ENCODE measurements at regions of chr6 and their contacts with region 1.

Region 1: DNA sequence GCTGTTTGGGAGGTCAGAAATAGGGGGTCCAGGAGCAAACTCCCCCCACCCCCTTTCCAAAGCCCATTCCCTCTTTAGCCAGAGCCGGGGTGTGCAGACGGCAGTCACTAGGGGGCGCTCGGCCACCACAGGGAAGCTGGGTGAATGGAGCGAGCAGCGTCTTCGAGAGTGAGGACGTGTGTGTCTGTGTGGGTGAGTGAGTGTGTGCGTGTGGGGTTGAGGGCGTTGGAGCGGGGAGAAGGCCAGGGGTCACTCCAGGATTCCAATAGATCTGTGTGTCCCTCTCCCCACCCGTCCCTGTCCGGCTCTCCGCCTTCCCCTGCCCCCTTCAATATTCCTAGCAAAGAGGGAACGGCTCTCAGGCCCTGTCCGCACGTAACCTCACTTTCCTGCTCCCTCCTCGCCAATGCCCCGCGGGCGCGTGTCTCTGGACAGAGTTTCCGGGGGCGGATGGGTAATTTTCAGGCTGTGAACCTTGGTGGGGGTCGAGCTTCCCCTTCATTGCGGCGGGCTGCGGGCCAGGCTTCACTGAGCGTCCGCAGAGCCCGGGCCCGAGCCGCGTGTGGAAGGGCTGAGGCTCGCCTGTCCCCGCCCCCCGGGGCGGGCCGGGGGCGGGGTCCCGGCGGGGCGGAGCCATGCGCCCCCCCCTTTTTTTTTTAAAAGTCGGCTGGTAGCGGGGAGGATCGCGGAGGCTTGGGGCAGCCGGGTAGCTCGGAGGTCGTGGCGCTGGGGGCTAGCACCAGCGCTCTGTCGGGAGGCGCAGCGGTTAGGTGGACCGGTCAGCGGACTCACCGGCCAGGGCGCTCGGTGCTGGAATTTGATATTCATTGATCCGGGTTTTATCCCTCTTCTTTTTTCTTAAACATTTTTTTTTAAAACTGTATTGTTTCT is at the start of gene VEGFA:
- DNase-seq: peak; percentile 95
- ATAC-seq: peak; percentile 74
- H3K4me3 Mint-ChIP-seq: peak within 1 kb of the TSS; percentile 96
- H3K27ac Mint-ChIP-seq: peak within 1 kb of the TSS; percentile 91
- H3K4me1 Mint-ChIP-seq: peaks cover 18% of the 10 kb centered on the region
- H3K27me3 Mint-ChIP-seq: peaks cover 4% of the 10 kb centered on the region
- total RNA-seq, gene VEGFA: 64.6 to 72.8 TPM

Region 2: GRCh38 chr6:43477235-43478007 is 292.4 kb before region 1 on chr6 and contains the start of gene TJAP1:
- CTCF ChIA-PET with region 1: no interaction called
- POLR2A ChIA-PET with region 1: no interaction called
- intact Hi-C with region 1: loop called in 1 of 2 experiments (anchors 5 kb)
- DNase-seq: peak; percentile 98
- ATAC-seq: peak; percentile 99
- H3K4me3 Mint-ChIP-seq: peak within 1 kb of the TSS; percentile 98
- H3K27ac Mint-ChIP-seq: peak within 1 kb of the TSS; percentile 82
- H3K4me1 Mint-ChIP-seq: peaks cover 38% of the 10 kb centered on the region
- H3K27me3 Mint-ChIP-seq: no peaks in the 10 kb centered on the region
- total RNA-seq, gene TJAP1: 35.6 to 37.2 TPM

Region 3: DNA sequence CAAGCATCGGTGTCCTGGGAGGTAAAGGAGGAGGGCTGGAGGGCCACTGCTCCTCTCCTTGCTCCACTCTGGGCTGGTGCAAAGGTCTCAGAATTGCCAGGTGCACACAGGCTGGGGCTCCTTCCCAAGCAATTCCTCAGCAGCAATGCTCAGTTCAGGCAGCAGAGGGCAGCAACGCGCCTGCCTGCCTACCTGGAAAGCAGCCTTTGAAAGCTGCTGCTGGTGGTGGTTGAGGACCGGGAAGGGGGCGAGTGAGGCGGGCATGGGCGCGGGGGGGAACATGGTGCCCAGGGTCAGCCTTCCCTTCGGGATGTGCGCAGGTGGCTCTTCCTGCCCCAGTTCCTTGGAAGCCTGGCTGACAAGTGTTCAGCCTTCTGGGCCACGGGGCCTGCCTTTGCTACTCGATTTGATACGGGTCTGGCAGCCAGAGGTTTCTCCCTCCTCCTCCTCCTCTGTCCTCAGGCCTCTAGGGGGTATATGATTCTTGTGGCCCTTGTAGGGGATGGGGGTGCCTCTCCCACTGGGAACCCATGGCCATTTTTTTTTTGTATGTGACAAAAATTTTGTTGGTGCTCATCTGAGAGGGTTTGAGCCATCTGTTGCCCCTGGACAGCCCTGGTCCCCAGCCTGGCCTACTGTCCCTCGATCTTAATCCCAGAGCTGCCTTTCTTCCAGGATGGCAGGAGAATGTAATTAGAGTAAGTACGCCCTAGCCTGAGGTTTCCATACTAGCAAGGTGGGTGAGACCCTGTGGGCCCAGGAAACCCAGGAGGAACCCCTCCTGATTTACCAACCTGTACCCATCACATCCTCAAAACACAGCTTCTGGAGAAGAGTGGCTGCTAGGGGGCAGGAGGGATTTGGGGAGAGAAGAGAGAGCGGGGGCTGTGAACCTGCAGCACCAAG is 102.3 kb before region 1 on chr6:
- CTCF ChIA-PET with region 1: interaction called, 20 read pairs
- POLR2A ChIA-PET with region 1: no interaction called
- intact Hi-C with region 1: loop called (anchors 1 to 5 kb)
- DNase-seq: peak; percentile 87
- ATAC-seq: peak; percentile 53
- H3K4me3 Mint-ChIP-seq: peak overlapping the region; percentile 43
- H3K27ac Mint-ChIP-seq: peak overlapping the region; percentile 77
- H3K4me1 Mint-ChIP-seq: peaks cover 44% of the 10 kb centered on the region
- H3K27me3 Mint-ChIP-seq: no peaks in the 10 kb centered on the region

Region 4: DNA sequence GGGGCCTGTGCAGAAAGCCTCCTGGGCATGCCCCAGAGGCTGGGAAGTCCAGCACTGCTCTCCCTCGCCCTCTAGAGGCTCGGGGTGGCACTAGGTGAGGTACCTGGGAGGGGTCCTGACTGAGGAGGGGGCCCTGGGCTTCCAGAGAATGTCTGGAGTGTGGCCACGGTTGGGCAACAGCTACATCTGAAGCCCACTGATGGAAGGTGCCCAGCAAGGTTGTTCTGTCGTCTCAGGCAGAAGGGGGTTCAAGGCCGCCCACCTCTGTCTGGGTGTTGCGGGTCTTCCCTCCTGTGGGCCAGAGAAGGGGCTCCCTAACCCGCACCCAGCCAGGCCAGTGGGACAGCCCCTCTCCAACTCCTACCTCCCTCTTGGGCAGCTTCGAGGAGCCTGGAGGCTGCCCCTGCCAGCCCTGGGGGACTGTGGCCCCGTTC is 11.1 kb before region 1 on chr6:
- CTCF ChIA-PET with region 1: interaction called, 26 read pairs
- POLR2A ChIA-PET with region 1: no interaction called
- intact Hi-C with region 1: no loop called
- DNase-seq: peak; percentile 64
- ATAC-seq: peak; percentile 81
- H3K4me3 Mint-ChIP-seq: no peak overlapping the region
- H3K27ac Mint-ChIP-seq: no peak overlapping the region
- H3K4me1 Mint-ChIP-seq: no peaks in the 10 kb centered on the region
- H3K27me3 Mint-ChIP-seq: peaks cover 6% of the 10 kb centered on the region

Region 5: DNA sequence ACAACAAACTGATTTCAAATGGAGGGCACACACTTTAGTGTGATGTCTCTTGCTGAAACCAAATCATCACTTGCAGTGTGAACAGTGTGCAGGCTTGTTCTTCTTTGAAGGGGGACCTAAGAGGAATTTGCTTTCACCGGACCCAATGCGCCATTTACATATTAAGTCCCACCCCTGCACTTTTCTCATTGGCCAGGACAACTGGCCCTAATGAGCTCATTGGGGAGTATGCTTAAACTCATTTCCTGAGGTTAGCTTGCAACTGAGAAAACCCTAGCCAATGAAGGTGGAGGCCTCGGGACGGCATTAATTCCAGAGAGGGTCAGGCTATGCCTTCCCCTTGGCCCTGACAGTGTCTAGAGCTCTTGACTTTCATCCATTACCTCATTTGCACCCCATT is 58.9 kb after region 1 on chr6:
- CTCF ChIA-PET with region 1: no interaction called
- POLR2A ChIA-PET with region 1: no interaction called
- intact Hi-C with region 1: no loop called
- DNase-seq: no peak
- ATAC-seq: no peak
- H3K4me3 Mint-ChIP-seq: no peak overlapping the region
- H3K27ac Mint-ChIP-seq: no peak overlapping the region
- H3K4me1 Mint-ChIP-seq: no peaks in the 10 kb centered on the region
- H3K27me3 Mint-ChIP-seq: no peaks in the 10 kb centered on the region

Region 6: DNA sequence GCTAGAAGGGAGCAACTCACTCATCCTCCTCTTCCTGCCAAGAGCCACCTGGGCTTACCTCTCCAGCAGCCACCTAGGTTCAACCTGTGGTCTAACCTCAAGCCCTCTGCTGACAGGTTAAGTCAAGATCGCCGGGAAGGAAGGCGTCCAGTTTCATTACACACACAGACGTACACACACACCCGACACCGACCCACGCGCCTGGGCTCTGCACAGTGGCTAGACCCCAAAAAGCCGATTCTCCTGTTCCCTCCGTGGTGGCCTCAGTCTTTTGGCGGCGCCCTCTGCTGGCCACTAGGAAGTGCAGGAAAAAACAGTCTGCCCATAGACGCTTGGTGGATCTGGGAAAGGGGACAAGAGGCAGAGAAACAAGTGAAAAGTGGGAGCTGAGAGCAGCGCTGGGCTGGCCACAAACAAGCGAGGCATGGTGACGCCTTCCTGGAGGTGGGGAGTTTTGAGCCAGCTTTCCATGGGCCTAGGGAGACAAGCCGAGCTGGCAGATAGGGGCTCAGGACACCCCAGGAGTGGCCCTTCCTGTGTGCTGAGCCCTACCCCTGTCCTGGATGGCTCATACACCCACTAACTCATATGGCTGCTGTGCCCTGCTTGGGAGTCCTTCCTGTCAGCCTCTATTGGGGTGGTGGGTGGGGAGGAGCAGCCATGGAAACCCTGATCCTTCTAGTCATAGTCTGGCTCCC is 304.8 kb after region 1 on chr6:
- CTCF ChIA-PET with region 1: interaction called, 46 read pairs
- POLR2A ChIA-PET with region 1: interaction called, 4 read pairs
- intact Hi-C with region 1: loop called (anchors 1 kb)
- DNase-seq: peak; percentile 89
- ATAC-seq: peak; percentile 55
- H3K4me3 Mint-ChIP-seq: peak overlapping the region; percentile 79
- H3K27ac Mint-ChIP-seq: peak overlapping the region; percentile 91
- H3K4me1 Mint-ChIP-seq: peaks cover 17% of the 10 kb centered on the region
- H3K27me3 Mint-ChIP-seq: peaks cover 16% of the 10 kb centered on the region

Region 7: DNA sequence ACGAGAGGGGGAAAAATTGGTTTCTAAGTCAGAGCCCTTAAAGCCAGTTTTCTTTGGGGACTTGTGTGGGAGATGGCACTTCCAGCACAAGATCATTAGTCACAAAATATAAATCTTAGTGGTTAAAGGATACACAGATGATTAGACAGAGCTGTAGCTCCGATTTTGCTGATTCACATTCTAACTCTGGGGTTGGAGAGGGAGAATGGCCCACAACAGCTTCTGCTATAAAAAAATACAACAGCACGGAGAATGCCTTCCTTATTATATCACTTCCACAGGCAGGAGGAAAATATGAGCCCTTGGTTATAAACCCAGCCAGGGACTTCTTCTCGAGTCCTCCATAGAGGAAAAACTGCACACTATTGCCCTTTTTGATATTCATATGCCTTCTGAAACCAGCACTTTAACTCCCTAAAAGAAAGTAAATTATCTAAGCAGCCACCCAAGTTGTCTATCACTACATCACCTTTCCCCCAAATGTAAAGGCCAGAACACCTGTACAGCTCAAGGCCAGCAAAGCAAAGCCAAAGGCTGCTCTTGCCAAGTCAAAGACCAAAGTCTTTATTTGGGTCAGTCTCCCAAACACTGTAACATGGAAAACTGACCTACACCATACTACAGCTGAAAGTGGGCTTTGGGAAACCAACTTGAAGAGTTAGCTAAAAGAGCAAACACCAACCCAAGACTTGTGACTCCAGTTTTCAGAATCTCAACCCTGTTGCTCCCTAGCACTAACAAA is 347.0 kb after region 1 on chr6:
- CTCF ChIA-PET with region 1: no interaction called
- POLR2A ChIA-PET with region 1: no interaction called
- intact Hi-C with region 1: no loop called
- DNase-seq: no peak
- ATAC-seq: peak; percentile 57
- H3K4me3 Mint-ChIP-seq: no peak overlapping the region
- H3K27ac Mint-ChIP-seq: no peak overlapping the region
- H3K4me1 Mint-ChIP-seq: peaks cover 41% of the 10 kb centered on the region
- H3K27me3 Mint-ChIP-seq: no peaks in the 10 kb centered on the region

Region 8: GRCh38 chr6:44312901-44313788 is 543.4 kb after region 1 on chr6 and contains the start of gene AARS2:
- CTCF ChIA-PET with region 1: no interaction called
- POLR2A ChIA-PET with region 1: no interaction called
- intact Hi-C with region 1: loop called in 1 of 2 experiments (anchors 10 kb)
- DNase-seq: peak; percentile 96
- ATAC-seq: peak; percentile 96
- H3K4me3 Mint-ChIP-seq: peak within 1 kb of the TSS; percentile 98
- H3K27ac Mint-ChIP-seq: peak within 1 kb of the TSS; percentile 86
- H3K4me1 Mint-ChIP-seq: peaks cover 14% of the 10 kb centered on the region
- H3K27me3 Mint-ChIP-seq: peaks cover 1% of the 10 kb centered on the region
- total RNA-seq, gene AARS2: 15.2 to 17.5 TPM

Measured in activated CD4-positive, alpha-beta T cell treated with anti-CD3 and anti-CD28 coated beads for 36 hours (primary cell).